AG04450 (cell line): ENCODE measurements at regions of chr3 and their contacts with region 1.

Region 1: DNA sequence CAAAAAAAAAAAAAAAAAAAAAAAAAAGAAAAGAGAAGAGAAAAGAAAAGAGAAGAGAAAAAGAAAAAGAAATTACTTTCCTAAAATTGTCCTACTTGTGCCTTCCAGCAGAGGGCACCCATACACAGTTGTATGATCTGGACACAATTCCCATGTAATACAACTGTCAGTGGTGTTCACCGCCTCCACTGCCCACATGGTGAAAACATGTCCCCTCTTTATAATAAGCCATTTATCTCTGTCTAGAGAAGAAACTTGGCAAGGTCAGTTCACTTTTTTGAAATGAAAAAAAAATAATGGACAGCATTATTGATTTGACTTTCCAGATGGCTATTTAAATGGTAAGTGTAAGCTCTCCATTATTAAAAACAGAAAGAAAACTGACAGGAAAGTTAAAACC is 459.4 kb downstream of the GBE1 start:
- DNase-seq: peak; percentile 15
- H3K4me3 ChIP-seq: no peak overlapping the region
- H3K27ac ChIP-seq: no peak overlapping the region
- H3K27me3 ChIP-seq: no peaks in the 10 kb centered on the region
- CTCF ChIP-seq: peak; percentile 80

Region 2: GRCh38 chr3:81132995-81133394 is 169.1 kb before region 1 on chr3:
- CTCF ChIA-PET with region 1: no interaction called
- POLR2A ChIA-PET with region 1: no interaction called
- DNase-seq: no peak
- H3K4me3 ChIP-seq: no peak overlapping the region
- H3K27ac ChIP-seq: no peak overlapping the region
- H3K27me3 ChIP-seq: no peaks in the 10 kb centered on the region
- CTCF ChIP-seq: no peak

Region 3: DNA sequence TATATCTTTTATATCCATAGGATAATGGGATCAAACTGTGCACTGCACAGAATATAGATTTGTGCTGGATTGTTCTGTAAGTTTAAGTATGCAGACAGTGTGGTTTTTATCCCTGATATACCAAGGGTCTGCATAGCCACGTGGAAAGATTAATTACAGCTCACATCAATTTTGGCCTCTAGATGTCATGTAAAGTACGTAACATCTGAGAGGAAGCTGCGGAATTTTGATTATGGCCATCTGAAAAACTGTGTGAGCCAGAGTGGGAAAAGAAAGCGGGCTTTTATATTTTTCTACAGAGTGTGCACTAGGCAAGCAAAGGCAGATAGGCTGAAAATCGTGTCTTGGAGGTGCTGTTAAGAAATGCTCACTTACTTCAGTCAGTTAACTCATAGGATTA is 103.3 kb before region 1 on chr3:
- CTCF ChIA-PET with region 1: no interaction called
- POLR2A ChIA-PET with region 1: no interaction called
- DNase-seq: no peak
- H3K4me3 ChIP-seq: no peak overlapping the region
- H3K27ac ChIP-seq: no peak overlapping the region
- H3K27me3 ChIP-seq: no peaks in the 10 kb centered on the region
- CTCF ChIP-seq: no peak

Region 4: GRCh38 chr3:81289676-81290075 is 12.4 kb before region 1 on chr3:
- CTCF ChIA-PET with region 1: interaction called, 27 read pairs
- POLR2A ChIA-PET with region 1: no interaction called
- DNase-seq: no peak
- H3K4me3 ChIP-seq: no peak overlapping the region
- H3K27ac ChIP-seq: no peak overlapping the region
- H3K27me3 ChIP-seq: no peaks in the 10 kb centered on the region
- CTCF ChIP-seq: no peak

Region 5: DNA sequence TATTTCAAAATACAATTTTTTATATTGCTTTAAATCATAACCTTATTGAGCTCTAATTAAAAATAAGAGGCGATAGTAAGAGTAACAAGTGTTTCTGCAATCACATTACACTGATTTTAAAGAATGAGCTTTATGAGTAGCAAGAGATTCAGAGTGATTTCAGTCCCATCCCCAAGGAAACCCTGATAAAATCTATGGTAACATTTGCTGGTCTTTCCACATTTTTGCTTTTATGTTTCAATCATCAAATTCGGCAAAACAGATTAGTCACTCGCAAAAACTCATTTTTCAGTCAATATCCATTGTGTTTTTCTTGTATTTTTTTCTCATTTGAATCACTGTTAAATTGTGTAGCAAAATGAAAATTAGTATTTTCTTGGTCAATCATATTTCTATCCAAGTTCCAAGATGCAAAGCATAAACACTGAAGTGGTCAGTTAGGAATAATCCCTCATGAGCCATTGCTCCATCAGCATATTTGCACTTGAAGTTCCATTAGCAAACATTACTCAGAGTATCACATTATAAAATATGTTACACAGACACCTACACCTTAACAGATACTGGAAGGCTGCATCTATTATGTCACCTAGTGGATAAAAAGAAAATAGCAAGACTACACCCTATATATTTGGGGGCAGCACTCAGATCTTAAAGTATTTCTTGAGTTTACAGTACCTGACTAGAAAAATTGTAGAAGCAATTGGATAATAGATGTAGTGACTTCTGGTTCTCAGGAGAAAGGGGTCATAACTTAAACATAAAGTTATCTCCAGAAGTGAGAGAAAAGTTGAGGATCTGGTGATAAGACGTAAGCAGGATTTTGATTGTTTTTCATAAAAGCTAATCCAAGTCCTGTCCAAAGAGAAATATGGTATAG is 36.9 kb after region 1 on chr3:
- CTCF ChIA-PET with region 1: interaction called, 17 read pairs
- POLR2A ChIA-PET with region 1: no interaction called
- DNase-seq: no peak
- H3K4me3 ChIP-seq: no peak overlapping the region
- H3K27ac ChIP-seq: no peak overlapping the region
- H3K27me3 ChIP-seq: no peaks in the 10 kb centered on the region
- CTCF ChIP-seq: peak; percentile 54

Region 6: DNA sequence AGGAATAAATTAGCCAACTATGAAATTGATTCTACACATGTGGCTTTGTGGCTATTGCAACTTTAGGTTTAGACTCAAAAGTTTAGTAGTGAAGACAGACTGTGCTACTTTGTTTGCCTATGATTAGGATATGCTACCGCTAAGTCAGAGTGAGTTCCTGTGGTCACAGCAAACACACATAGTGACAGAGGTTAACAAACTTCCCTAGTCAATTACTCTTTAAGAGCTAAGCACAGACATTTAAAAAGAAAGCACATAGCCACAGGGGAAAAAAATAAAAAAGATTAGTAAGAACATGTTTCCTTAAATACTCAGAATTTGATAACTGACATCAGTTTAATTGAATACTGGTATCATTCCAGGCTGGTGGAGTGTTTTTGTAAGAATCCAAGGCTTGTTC is 252.3 kb after region 1 on chr3:
- CTCF ChIA-PET with region 1: no interaction called
- POLR2A ChIA-PET with region 1: no interaction called
- DNase-seq: peak; percentile 20
- H3K4me3 ChIP-seq: no peak overlapping the region
- H3K27ac ChIP-seq: no peak overlapping the region
- H3K27me3 ChIP-seq: no peaks in the 10 kb centered on the region
- CTCF ChIP-seq: no peak